ENCODE measurements at regions of chr3 and their contacts with region 1.

Region 1: DNA sequence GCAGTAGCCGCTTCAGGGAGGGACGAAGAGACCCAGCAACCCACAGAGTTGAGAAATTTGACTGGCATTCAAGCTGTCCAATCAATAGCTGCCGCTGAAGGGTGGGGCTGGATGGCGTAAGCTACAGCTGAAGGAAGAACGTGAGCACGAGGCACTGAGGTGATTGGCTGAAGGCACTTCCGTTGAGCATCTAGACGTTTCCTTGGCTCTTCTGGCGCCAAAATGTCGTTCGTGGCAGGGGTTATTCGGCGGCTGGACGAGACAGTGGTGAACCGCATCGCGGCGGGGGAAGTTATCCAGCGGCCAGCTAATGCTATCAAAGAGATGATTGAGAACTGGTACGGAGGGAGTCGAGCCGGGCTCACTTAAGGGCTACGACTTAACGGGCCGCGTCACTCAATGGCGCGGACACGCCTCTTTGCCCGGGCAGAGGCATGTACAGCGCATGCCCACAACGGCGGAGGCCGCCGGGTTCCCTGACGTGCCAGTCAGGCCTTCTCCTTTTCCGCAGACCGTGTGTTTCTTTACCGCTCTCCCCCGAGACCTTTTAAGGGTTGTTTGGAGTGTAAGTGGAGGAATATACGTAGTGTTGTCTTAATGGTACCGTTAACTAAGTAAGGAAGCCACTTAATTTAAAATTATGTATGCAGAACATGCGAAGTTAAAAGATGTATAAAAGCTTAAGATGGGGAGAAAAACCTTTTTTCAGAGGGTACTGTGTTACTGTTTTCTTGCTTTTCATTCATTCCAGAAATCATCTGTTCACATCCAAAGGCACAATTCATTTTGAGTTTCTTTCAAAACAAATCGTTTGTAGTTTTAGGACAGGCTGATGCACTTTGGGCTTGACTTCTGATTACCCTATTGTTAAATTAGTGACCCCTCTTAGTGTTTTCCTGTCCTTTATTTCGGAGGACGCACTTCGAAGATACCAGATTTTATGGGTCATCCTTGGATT is at the start of gene MLH1:
- DNase-seq: peak; percentile 100
- H3K4me3 Mint-ChIP-seq: no peak within 1 kb of the TSS
- H3K27ac Mint-ChIP-seq: no peak within 1 kb of the TSS
- H3K4me1 Mint-ChIP-seq: peaks cover 45% of the 10 kb centered on the region
- H3K27me3 Mint-ChIP-seq: no peaks in the 10 kb centered on the region
- total RNA-seq, gene MLH1: 86.6 to 95.3 TPM

Region 2: DNA sequence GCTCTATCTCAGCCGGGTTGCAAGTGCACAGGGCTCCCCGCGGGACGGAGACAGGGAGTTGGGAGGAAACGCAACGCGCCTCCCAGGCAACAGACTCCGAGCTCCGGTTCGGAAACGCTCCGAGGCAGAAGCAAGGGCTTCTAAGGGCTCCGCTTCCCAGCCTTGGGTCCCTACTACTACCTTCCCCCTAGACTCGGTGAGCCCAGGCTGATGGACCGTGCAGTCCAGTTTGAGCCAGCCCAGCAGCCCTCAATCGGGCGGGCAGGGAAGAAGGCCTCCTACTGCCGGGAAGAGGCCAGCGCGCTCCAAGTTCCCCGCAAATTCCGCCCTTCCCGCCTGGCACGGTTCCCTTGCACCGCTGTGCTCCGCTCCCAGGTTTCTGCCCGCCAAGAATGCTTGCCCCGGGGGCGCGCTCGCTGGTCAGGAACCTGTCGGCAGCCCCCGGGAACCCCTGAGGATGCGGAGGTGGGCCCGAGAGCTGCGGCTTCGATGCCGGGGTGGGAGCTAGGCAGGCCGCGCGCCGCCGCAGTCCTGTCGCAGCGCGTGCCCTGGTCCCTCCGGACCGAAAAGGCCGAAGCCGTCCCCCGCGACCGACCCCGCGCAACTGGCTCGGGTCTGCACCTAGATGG is 49.5 kb before region 1 on chr3:
- CTCF ChIA-PET with region 1: interaction called, 3 read pairs
- intact Hi-C with region 1: loop called (anchors 1 kb)
- DNase-seq: peak; percentile 53
- H3K4me3 Mint-ChIP-seq: peak overlapping the region; percentile 78
- H3K27ac Mint-ChIP-seq: no peak overlapping the region
- H3K4me1 Mint-ChIP-seq: peaks cover 10% of the 10 kb centered on the region
- H3K27me3 Mint-ChIP-seq: no peaks in the 10 kb centered on the region

Region 3: GRCh38 chr3:36969540-36970432 is 23.8 kb before region 1 on chr3:
- CTCF ChIA-PET with region 1: interaction called, 3 read pairs
- intact Hi-C with region 1: loop called (anchors 1 kb)
- DNase-seq: peak; percentile 71
- H3K4me3 Mint-ChIP-seq: no peak overlapping the region
- H3K27ac Mint-ChIP-seq: peak overlapping the region; percentile 47
- H3K4me1 Mint-ChIP-seq: peaks cover 19% of the 10 kb centered on the region
- H3K27me3 Mint-ChIP-seq: no peaks in the 10 kb centered on the region

Region 4: GRCh38 chr3:38235466-38235865 is 1241.9 kb after region 1 on chr3:
- CTCF ChIA-PET with region 1: no interaction called
- intact Hi-C with region 1: no loop called
- DNase-seq: no peak
- H3K4me3 Mint-ChIP-seq: no peak overlapping the region
- H3K27ac Mint-ChIP-seq: no peak overlapping the region
- H3K4me1 Mint-ChIP-seq: no peaks in the 10 kb centered on the region
- H3K27me3 Mint-ChIP-seq: no peaks in the 10 kb centered on the region

Measured in activated naive CD4-positive, alpha-beta T cell treated with anti-CD3 and anti-CD28 coated beads for 36 hours (primary cell).